A673 (cell line): ENCODE measurements at regions of chr1 and their contacts with region 1.

Region 1: GRCh38 chr1:205658943-205659581 is 21.2 kb downstream of the SLC45A3 start:
- DNase-seq: peak; percentile 88
- H3K4me3 ChIP-seq: no peak overlapping the region
- H3K27ac ChIP-seq: no peak overlapping the region
- H3K4me1 ChIP-seq: no peaks in the 10 kb centered on the region
- H3K27me3 ChIP-seq: no peaks in the 10 kb centered on the region
- CTCF ChIP-seq: peak; percentile 96

Region 2: DNA sequence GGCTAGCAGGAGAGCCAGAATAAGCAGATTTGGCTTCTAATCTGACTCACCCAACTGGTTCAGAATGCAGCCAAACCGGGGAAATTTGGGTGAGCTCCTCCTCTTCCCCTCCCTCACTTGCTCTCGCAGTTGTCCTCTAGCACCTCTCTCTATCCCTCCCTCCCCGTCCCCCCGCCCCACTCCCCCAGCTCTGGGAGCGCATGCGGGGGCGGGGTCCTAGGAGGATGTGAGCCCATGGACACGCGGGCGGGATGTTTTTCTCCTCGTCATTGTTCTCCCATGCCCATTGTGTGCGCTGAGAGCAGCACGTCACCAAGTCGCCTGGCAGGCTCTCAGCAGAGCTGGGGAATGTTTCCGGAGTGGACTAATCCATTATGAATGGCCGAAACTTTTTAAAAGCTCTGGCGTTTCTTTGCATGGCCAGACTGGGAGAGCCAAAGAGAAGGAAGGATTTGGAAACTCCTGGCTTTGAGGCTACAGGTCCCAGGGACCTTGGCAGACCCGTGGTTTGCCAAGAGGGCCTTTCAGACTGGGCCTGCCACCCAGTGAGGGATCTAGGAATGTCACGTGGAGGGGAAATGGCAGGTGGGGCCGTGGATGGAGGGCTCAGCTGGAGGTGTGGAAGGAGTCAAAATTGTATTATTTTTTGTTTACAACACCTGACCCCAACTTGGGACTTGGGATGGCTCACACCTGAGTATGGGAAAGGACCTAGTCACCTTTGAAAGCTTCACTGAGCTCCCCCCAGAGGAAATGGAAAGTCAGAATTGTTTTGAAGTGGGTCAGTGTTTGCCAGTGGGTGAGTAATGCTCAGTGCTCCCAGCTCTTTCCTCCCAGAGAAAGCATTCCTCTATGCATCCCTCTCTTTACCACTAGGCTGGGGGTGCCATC is 115.4 kb before region 1 on chr1:
- CTCF ChIA-PET with region 1: interaction called, 11 read pairs
- POLR2A ChIA-PET with region 1: no interaction called
- intact Hi-C with region 1: no loop called
- DNase-seq: peak; percentile 89
- H3K4me3 ChIP-seq: peak overlapping the region; percentile 31
- H3K27ac ChIP-seq: peak overlapping the region; percentile 45
- H3K4me1 ChIP-seq: peaks cover 11% of the 10 kb centered on the region
- H3K27me3 ChIP-seq: peaks cover 5% of the 10 kb centered on the region
- CTCF ChIP-seq: no peak

Region 3: GRCh38 chr1:205582471-205583291 is 76.4 kb before region 1 on chr1:
- CTCF ChIA-PET with region 1: no interaction called
- POLR2A ChIA-PET with region 1: no interaction called
- intact Hi-C with region 1: no loop called
- DNase-seq: peak; percentile 58
- H3K4me3 ChIP-seq: no peak overlapping the region
- H3K27ac ChIP-seq: no peak overlapping the region
- H3K4me1 ChIP-seq: peaks cover 8% of the 10 kb centered on the region
- H3K27me3 ChIP-seq: peaks cover 16% of the 10 kb centered on the region
- CTCF ChIP-seq: no peak

Region 4: DNA sequence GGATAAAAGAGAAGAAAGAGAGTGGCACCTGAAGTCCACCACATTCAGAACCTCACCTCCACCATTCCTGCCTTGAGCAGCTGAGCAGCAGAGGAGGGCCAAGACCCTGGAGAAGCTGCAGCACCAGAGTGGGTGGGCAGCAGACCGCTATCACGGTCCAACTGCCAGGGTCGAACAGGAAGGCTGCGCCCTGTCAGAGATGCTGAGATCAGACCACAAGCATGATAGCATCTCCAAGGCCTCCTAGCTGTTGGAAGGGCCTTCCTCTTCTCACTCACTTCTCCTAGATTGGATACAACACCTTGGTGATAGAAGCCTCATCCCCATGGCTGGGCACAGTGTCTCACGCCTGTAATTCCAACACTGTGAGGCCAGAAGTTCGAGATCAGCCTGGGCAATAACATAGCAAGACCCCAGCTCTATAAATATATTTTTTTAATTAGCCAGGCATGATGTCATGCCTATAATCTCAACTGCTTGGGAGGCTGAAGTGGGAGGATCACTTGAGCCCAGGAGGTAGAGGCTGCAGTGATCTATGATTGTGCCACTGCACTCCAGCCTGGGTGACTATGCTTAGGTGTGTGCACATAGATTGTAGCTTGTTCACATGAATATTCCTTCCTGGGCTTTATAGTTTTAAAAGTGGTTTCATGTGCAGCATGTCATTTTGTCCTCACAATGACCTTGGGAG is 33.5 kb after region 1 on chr1:
- CTCF ChIA-PET with region 1: interaction called, 15 read pairs
- POLR2A ChIA-PET with region 1: no interaction called
- intact Hi-C with region 1: no loop called
- DNase-seq: no peak
- H3K4me3 ChIP-seq: no peak overlapping the region
- H3K27ac ChIP-seq: no peak overlapping the region
- H3K4me1 ChIP-seq: peaks cover 6% of the 10 kb centered on the region
- H3K27me3 ChIP-seq: no peaks in the 10 kb centered on the region
- CTCF ChIP-seq: no peak

Region 5: DNA sequence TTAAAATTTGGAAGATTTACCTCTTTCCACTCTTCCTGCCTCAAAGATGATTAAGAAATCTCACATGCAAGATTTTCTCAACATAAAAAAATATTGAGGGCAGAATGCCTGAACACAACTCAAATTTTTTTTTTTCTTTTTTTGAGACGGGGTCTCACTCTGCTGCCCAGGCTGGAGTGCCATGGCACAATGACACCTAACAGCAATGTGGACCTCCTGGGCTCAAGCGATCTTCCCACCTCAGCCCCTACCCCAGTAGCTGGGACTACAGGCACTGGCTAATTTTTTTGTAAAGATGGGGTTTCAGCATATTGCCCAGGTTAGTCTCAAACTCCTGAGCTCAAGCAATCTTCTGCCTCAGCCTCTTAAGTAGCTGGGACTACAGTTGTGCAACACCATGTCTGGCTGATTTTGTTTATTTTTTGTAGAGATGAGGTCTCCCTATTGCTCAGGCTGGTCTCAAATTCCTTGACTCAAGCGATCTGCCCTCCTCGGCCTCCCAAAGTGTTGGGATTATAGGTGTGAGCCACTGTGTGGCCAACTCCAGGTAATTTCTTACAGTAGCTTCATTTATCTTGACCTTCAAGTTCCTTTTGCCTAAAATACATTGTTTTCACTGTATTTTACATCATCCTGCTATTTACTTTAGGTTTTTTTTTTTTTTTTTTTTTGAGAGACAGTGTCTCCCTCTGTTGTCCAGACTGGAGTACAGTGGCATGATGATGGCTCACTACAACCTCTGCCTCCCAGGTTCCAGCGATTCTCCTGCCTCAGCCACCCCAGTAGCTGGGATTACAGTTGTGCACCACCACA is 80.5 kb after region 1 on chr1:
- CTCF ChIA-PET with region 1: interaction called, 24 read pairs
- POLR2A ChIA-PET with region 1: no interaction called
- intact Hi-C with region 1: no loop called
- DNase-seq: no peak
- H3K4me3 ChIP-seq: no peak overlapping the region
- H3K27ac ChIP-seq: no peak overlapping the region
- H3K4me1 ChIP-seq: peaks cover 18% of the 10 kb centered on the region
- H3K27me3 ChIP-seq: no peaks in the 10 kb centered on the region
- CTCF ChIP-seq: peak; percentile 24; the same call in 1 of the 2 replicates